ENCODE measurements at regions of chr19 and their contacts with region 1.

Region 1: GRCh38 chr19:12052497-12053169 is at the start of gene ZNF878:
- DNase-seq: peak; percentile 89 to 91
- ATAC-seq: peak; percentile 99 to 100 (median 99)
- H3K4me3 ChIP-seq: peak within 1 kb of the TSS; percentile 44 to 85 (median 68)
- H3K27ac ChIP-seq: peak within 1 kb of the TSS in 9 of 10 donors; percentile 36 to 76 (median 72)
- H3K4me1 ChIP-seq: peaks cover 0 to 17% (median 11%) of the 10 kb centered on the region in 9 donors
- H3K27me3 ChIP-seq: peaks cover 0 to 4% (median 0%) of the 10 kb centered on the region in 7 donors
- CTCF ChIP-seq: peak in 4 of 9 donors; percentile 20 to 43 (median 41)
- total RNA-seq, gene ZNF878: 0.21 to 0.48 (median 0.34) TPM in 6 of 10 donors, not detected in the others

Region 2: DNA sequence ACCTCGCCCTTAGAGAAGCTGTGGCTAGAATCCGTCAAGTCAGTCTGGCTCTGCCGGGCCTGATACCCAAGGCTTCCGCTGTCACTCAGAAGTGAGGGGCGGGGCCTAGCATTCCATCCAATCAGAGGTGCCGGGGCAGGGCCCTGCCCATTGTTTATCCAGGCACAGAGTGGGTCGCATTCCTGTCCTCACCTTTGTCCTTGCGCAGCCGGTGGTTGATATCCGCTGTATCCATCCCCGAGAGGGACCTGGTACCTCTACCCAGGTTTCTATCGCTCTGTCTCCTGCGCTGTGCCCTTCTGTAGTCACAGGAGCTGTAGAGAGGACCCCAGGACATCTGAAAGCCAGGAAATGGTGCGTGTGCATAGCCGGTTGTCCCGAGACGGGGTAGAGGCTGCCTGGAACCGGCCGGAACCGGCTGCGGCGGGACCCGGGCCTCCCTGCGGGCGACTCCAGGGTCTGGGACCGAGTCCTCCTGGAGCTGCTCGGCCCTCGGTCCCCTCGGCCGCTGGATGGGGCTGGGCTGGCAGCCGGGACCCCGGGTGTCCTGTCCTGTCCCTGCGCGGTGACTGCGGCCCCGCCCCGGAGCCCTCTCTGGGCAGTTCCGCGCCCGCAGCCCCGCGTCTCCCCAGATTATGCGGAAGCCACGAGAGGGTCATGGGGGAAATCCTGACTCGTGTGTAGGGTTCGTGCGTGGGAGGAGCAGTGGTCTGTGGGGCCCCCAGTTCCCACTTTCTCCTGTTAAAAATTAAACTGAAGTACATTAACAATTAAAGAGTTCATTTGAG is 87.6 kb before region 1 on chr19 and contains the start of gene ZNF763:
- intact Hi-C with region 1: loop called in 1 of 10 experiments (anchors 10 kb)
- DNase-seq: peak; percentile 92 to 95
- ATAC-seq: peak; percentile 96 to 99 (median 99)
- H3K4me3 ChIP-seq: peak within 1 kb of the TSS; percentile 55 to 94 (median 87)
- H3K27ac ChIP-seq: peak within 1 kb of the TSS; percentile 88 to 98 (median 95)
- H3K4me1 ChIP-seq: peaks cover 5 to 25% (median 17%) of the 10 kb centered on the region in 9 donors
- H3K27me3 ChIP-seq: no peaks in the 10 kb centered on the region
- CTCF ChIP-seq: no peak
- total RNA-seq, gene ZNF763: 1.7 to 7.1 (median 4.8) TPM

Region 3: GRCh38 chr19:12035220-12036153 is 17.1 kb before region 1 on chr19 and contains the start of gene ZNF433:
- intact Hi-C with region 1: loop called in 1 of 10 experiments (anchors 2 kb)
- DNase-seq: peak; percentile 95 to 96
- ATAC-seq: peak; percentile 99 to 100 (median 100)
- H3K4me3 ChIP-seq: peak within 1 kb of the TSS; percentile 74 to 97 (median 89)
- H3K27ac ChIP-seq: peak within 1 kb of the TSS; percentile 55 to 92 (median 88)
- H3K4me1 ChIP-seq: peaks cover 0 to 20% (median 8%) of the 10 kb centered on the region in 9 donors
- H3K27me3 ChIP-seq: no peaks in the 10 kb centered on the region
- CTCF ChIP-seq: peak in 3 of 9 donors; percentile 5 to 30 (median 21)
- total RNA-seq, gene ZNF433: 2.9 to 6.6 (median 4.1) TPM

Region 4: DNA sequence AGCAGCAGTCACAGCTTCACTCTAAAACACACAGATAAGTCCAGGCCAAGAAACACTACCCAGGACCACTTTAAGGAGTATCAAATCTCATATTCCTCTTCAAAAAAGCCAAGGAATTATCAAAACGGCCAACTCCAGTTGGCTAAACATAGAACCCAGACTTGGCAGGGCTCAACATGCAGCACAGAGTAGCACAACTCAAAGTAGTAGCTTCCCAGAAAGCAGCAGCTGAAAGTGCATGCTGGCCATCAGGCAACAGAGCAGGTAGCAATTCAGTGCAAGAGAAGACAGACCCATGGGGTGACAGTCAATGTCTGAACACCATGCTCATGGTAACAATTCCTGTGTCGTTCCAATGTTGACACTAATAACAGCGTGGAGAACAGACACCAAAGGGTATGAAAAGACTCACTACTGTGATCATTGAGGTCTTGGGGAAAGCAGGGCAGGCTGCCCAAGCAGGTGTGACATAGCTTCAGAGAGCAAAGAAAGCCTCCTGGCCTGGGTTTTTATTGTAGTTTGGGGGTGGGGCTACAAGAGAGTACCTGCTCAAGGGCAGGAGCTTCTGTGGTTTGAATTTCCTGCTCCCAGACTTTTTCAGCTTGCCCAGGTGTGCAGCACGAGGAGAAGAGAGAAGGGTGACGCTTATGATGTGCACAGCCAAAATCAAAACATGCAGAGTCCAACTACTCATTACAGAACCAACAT is 425.8 kb after region 1 on chr19:
- intact Hi-C with region 1: no loop called
- DNase-seq: no peak
- ATAC-seq: peak in 1 of 8 donors; percentile 50
- H3K4me3 ChIP-seq: no peak overlapping the region
- H3K27ac ChIP-seq: peak overlapping the region in 1 of 10 donors; percentile 7
- H3K4me1 ChIP-seq: peaks cover 0 to 26% (median 21%) of the 10 kb centered on the region in 9 donors
- H3K27me3 ChIP-seq: no peaks in the 10 kb centered on the region
- CTCF ChIP-seq: no peak

Measured in heart right ventricle (tissue), 16 donors.